BJ (cell line): ENCODE measurements at regions of chr3 and their contacts with region 1.

Region 1: DNA sequence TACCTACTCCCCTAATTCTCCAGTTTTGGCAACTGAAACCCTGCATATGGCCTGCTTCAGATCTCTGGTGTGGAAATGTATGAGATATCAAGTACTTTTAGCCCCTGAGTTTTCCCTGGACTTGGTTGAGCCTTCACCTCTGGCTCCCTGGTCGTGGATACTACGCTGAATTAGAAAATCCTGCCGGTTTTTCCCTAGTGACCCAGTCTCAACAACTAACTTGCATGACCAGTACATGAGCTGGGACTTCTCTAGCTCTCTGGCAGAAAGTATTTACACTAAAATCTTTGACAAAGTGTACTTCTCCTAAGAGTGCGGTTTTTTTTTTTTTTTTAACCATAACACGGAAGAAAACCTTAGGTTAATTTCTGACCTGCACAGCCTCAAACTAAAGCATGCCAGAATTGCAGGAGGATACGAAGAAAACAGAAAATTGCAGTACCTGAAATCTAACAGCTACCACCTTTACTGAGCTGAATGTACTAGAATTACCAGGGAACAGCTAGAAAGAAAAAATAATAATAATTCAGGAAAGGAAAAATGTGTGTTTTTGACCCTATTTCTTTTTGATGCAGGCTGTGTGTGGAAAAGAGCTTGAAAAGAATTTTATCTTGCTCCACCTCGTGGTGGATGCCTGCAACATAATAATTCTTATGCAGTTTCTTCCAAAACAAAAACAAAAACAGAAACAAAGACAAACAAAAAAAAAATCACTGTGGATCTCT is 165.6 kb downstream of the GMNC start:
- DNase-seq: no peak
- H3K4me3 ChIP-seq: no peak overlapping the region
- H3K27me3 ChIP-seq: no peaks in the 10 kb centered on the region; the same call in 1 of the 2 replicates
- CTCF ChIP-seq: peak; percentile 57

Region 2: GRCh38 chr3:190224863-190225692 is 471.9 kb before region 1 on chr3:
- CTCF ChIA-PET with region 1: interaction called, 13 read pairs
- POLR2A ChIA-PET with region 1: interaction called, 3 read pairs
- DNase-seq: peak; percentile 11
- H3K4me3 ChIP-seq: no peak overlapping the region
- H3K27me3 ChIP-seq: no peaks in the 10 kb centered on the region
- CTCF ChIP-seq: peak; percentile 57

Region 3: DNA sequence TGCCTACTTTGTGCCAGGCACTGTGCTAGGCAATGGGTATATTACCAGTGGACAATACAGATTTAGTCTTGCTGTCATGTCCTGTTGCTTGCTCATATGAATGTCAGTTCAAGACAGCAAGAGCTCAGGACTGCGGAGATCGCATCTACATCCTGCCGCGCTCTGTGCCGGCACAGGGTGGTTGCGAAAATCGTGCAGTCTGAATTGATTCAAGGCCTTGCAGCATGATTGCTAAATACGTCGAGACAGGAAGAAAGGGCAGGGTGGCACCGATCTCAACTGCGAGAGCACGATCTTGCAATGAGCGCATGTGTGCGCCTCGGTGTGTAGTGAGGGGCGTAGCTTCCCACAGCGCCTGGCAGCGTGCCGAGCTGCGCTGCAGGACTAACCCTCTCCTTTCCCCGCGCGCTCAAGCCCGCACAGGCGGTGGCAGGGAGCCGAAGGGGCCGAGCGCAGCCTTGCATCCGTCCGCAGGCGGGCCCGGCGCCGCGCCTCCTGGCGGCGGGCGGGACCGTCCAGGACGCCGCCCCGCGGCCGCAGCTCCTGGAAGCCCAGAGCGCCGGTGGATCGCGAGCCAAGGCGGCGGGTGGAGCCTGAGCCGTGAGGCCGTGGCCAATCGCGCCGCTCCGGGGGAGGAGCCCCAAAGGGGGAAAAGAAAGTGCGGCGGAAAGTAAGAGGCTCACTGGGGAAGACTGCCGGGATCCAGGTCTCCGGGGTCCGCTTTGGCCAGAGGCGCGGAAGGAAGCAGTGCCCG is 183.4 kb before region 1 on chr3 and contains the start of gene IL1RAP:
- CTCF ChIA-PET with region 1: interaction called, 25 read pairs
- POLR2A ChIA-PET with region 1: no interaction called
- DNase-seq: peak; percentile 65
- H3K4me3 ChIP-seq: peak within 1 kb of the TSS; percentile 57
- H3K27me3 ChIP-seq: no peaks in the 10 kb centered on the region
- CTCF ChIP-seq: peak; percentile 7; the same call in 1 of the 2 replicates
- polyA plus RNA-seq, gene IL1RAP: 8.6 and 9.0 TPM in 2 replicates